ENCODE measurements at regions of chr3 and their contacts with region 1.

Region 1: GRCh38 chr3:70064194-70064779 is 64.8 kb downstream of the SAMMSON start:
- DNase-seq: no peak
- ATAC-seq: no peak

Region 2: GRCh38 chr3:70358978-70359580 is 294.8 kb after region 1 on chr3:
- intact Hi-C with region 1: loop called (anchors 10 kb)
- DNase-seq: no peak
- ATAC-seq: no peak